Panc1 (cell line): ENCODE measurements at regions of chr14 and their contacts with region 1.

Region 1: DNA sequence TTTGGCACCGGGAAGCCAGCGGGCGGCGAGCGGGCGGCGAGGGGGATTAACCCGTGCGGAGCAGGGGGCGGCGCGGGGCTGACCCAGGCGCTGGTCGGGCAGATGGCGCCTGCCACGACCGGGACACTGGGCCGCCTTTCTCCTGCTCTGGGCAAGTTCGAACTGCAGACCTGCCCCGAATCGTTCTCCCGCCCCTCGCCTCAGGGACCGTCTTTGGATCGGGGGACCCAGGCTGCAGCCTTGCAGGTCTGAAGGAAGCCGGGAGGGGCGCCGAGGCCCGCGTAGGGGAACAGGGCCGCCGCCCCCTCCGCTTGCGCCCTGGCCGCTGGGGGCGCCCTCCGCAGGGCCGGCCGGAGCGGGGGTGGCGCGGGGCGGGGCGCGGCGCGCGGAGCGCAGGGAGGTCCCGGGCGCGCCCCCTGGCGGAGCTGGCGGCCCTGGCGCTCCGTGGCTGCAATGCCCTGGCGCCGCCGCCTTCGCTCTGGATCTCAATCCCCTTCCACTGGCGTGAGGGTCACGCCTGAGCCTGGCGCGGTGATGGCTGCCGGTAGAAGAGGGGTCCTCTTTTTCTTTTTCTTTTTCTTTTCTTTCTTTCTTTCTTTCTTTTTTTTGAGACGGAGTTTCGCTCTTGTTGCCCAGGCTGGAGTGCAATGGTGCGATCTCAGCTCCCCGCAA is 449 bp upstream of the LTBP2 start:
- DNase-seq: no peak
- ATAC-seq: peak; percentile 75
- H3K4me3 ChIP-seq: peak overlapping the region; percentile 52 to 62
- H3K27ac ChIP-seq: peak overlapping the region; percentile 95
- H3K4me1 ChIP-seq: peaks cover 56% of the 10 kb centered on the region
- H3K27me3 ChIP-seq: no peaks in the 10 kb centered on the region
- CTCF ChIP-seq: peak; percentile 99

Region 2: GRCh38 chr14:74542056-74542685 is 70.3 kb before region 1 on chr14:
- CTCF ChIA-PET with region 1: no interaction called
- POLR2A ChIA-PET with region 1: no interaction called
- in situ Hi-C with region 1: no loop called
- intact Hi-C with region 1: no loop called
- DNase-seq: no peak
- ATAC-seq: no peak
- H3K4me3 ChIP-seq: no peak overlapping the region
- H3K27ac ChIP-seq: no peak overlapping the region
- H3K4me1 ChIP-seq: no peaks in the 10 kb centered on the region
- H3K27me3 ChIP-seq: no peaks in the 10 kb centered on the region
- CTCF ChIP-seq: no peak

Region 3: DNA sequence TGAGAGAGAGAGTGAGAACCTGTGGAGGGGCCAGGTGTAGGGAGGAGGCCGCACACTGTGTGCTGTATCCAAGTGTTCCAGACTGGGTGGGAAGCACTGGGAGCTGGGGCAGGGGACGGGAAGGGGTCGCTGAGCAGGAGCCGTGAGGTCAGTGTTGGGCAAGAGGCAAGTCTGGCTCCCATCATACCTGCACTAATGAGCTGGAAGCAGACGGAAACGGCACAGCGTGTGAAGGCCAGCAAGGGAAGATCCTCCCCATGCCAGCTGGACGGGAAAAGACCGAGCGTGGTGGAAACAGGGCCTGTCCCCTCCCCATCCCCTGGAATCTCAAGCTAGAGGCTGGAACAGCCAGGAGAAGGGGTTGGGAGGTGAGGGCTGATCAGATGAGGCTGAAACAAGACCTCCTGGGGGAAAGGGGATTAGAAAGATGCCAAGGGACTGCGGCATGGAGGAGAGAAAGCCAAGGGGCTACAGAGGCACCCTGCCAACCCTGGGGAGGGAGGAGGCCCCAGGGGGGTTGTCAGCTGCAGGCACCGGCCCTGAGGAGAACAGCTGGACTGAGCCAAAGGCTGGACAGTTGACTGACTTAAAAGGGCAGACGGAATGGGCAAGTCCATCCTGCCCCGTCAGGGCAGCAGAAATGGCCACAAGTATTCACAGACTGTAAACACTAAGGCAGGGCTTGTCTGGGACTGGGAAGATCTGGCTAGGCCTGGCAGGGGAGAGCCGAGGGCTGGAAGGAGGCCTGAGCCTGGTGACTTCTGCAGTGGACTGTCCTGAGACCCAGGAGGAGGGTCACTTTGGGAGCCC is 18.6 kb after region 1 on chr14:
- CTCF ChIA-PET with region 1: interaction called, 11 read pairs
- POLR2A ChIA-PET with region 1: interaction called, 4 read pairs
- in situ Hi-C with region 1: no loop called
- intact Hi-C with region 1: no loop called
- DNase-seq: no peak
- ATAC-seq: no peak
- H3K4me3 ChIP-seq: no peak overlapping the region
- H3K27ac ChIP-seq: no peak overlapping the region
- H3K4me1 ChIP-seq: no peaks in the 10 kb centered on the region
- H3K27me3 ChIP-seq: no peaks in the 10 kb centered on the region
- CTCF ChIP-seq: no peak

Region 4: DNA sequence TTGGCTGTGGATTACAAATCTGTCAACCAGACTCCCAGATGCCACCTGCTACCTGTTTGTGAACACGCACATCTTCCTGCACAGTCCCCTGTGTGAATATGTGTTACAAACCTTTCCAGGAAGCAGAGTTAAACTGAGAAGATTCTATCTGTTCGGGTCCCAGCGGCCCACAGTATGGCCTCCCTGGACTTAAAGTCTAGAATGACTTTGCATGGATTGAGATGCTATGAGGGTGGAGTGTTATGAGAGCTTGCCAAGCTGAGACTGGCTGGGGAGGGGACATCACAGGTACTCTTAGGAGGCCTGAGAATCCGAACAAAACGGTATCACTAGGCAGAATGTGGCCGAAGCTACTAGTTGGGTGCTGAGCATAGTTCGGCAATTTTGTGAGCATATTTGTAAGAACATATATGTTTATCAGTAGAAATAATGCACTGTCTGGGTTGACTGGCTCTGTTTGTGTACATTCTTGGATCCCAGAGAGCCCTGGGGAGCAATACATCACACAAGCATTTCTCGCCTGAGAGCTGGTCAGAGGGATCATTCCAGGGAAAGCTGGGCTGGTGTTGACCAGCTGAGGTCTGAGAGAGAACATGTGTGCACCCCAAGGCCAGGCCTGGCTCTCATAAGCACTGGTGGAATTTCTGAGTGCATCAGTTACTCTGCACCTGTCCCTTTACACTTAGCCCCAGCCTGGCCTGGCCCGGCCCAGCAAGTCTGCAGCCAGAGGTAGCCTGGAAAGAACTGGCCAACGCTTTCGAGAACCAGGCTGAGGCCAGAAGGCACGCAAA is 29.3 kb after region 1 on chr14:
- CTCF ChIA-PET with region 1: no interaction called
- POLR2A ChIA-PET with region 1: interaction called, 16 read pairs
- in situ Hi-C with region 1: no loop called
- intact Hi-C with region 1: no loop called
- DNase-seq: no peak
- ATAC-seq: peak; percentile 13; the same call in 1 of the 2 replicates
- H3K4me3 ChIP-seq: no peak overlapping the region
- H3K27ac ChIP-seq: no peak overlapping the region
- H3K4me1 ChIP-seq: no peaks in the 10 kb centered on the region
- H3K27me3 ChIP-seq: no peaks in the 10 kb centered on the region
- CTCF ChIP-seq: no peak

Region 5: DNA sequence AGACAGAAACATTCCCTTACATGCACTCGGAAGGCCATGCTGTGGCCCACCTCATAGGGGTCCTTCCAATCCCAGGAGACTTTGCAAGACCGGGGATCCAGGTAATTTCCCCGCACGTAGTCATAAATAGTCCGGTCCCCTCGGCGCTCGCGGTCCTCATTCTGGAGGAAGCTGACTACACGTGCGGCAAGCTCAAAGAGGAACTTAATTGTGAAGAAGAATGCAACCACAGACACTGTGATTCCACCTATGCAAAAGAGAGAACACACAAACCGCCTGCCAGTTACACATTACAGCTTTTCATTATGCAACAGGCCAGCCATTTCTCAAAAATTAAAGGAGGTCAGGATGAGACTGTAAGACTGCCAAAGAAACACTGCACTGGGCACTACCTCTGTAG is 71.9 kb after region 1 on chr14:
- CTCF ChIA-PET with region 1: no interaction called
- POLR2A ChIA-PET with region 1: no interaction called
- in situ Hi-C with region 1: no loop called
- intact Hi-C with region 1: loop called (anchors 10 kb)
- DNase-seq: no peak
- ATAC-seq: no peak
- H3K4me3 ChIP-seq: no peak overlapping the region
- H3K27ac ChIP-seq: no peak overlapping the region
- H3K4me1 ChIP-seq: no peaks in the 10 kb centered on the region
- H3K27me3 ChIP-seq: no peaks in the 10 kb centered on the region
- CTCF ChIP-seq: no peak

Region 6: DNA sequence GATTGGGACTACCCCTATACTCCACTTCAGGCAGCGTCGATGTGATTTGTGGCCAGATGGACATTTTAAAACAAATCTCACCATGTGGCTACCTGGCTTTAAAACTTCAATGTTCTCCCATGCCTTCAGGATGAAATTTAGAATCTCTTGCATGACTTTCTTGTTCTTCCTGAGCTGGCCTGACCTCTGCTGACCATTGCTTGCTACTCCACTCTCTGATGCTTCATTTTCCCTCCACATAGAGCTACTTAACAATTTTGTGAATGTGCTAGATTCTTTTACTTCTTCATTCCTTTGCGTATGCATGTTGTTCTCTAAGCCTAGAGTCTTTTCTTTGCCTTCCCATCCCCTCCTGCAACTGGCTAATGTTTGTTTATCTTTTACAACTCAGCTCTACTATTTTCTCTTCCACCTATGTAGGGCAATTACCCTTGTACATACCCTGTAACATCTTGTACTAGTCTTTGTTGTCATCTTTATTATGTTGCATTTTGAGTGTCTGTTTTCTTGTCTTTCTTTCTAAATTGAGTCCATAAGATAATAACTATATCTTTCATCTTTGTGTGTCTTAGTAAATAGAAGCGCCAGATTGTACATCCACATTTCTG is 191.8 kb after region 1 on chr14:
- CTCF ChIA-PET with region 1: interaction called, 5 read pairs
- POLR2A ChIA-PET with region 1: no interaction called
- in situ Hi-C with region 1: no loop called
- intact Hi-C with region 1: loop called (anchors 2 kb)
- DNase-seq: peak; percentile 24
- ATAC-seq: peak; percentile 80; the same call in 1 of the 2 replicates
- H3K4me3 ChIP-seq: no peak overlapping the region
- H3K27ac ChIP-seq: no peak overlapping the region
- H3K4me1 ChIP-seq: no peaks in the 10 kb centered on the region
- H3K27me3 ChIP-seq: no peaks in the 10 kb centered on the region
- CTCF ChIP-seq: peak; percentile 70

Region 7: GRCh38 chr14:74852927-74853514 is 240.5 kb after region 1 on chr14:
- CTCF ChIA-PET with region 1: no interaction called
- POLR2A ChIA-PET with region 1: no interaction called
- in situ Hi-C with region 1: no loop called
- intact Hi-C with region 1: no loop called
- DNase-seq: no peak
- ATAC-seq: no peak
- H3K4me3 ChIP-seq: no peak overlapping the region
- H3K27ac ChIP-seq: no peak overlapping the region
- H3K4me1 ChIP-seq: no peaks in the 10 kb centered on the region
- H3K27me3 ChIP-seq: no peaks in the 10 kb centered on the region
- CTCF ChIP-seq: no peak